ENCODE measurements at regions of chr11 and their contacts with region 1.

Region 1: GRCh38 chr11:82867495-82868082 is 32.6 kb downstream of the PRCP start:
- DNase-seq: peak; percentile 79
- ATAC-seq: peak; percentile 88
- H3K4me3 Mint-ChIP-seq: no peak overlapping the region
- H3K27ac Mint-ChIP-seq: no peak overlapping the region; the same call in 1 of the 2 replicates
- H3K4me1 Mint-ChIP-seq: peaks cover 21% of the 10 kb centered on the region
- H3K27me3 Mint-ChIP-seq: no peaks in the 10 kb centered on the region
- CTCF ChIP-seq: peak; percentile 68

Region 2: GRCh38 chr11:82718307-82718706 is 149.3 kb before region 1 on chr11:
- CTCF ChIA-PET with region 1: interaction called, 22 read pairs
- POLR2A ChIA-PET with region 1: no interaction called
- DNase-seq: peak; percentile 34
- ATAC-seq: peak; percentile 77
- H3K4me3 Mint-ChIP-seq: no peak overlapping the region
- H3K27ac Mint-ChIP-seq: no peak overlapping the region
- H3K4me1 Mint-ChIP-seq: peaks cover 3% of the 10 kb centered on the region; the same call in 1 of the 2 replicates
- H3K27me3 Mint-ChIP-seq: no peaks in the 10 kb centered on the region
- CTCF ChIP-seq: peak; percentile 55

Region 3: GRCh38 chr11:82775736-82776346 is 91.7 kb before region 1 on chr11:
- CTCF ChIA-PET with region 1: interaction called, 17 read pairs
- POLR2A ChIA-PET with region 1: no interaction called
- DNase-seq: peak; percentile 78
- ATAC-seq: peak; percentile 100
- H3K4me3 Mint-ChIP-seq: no peak overlapping the region
- H3K27ac Mint-ChIP-seq: no peak overlapping the region
- H3K4me1 Mint-ChIP-seq: no peaks in the 10 kb centered on the region
- H3K27me3 Mint-ChIP-seq: no peaks in the 10 kb centered on the region
- CTCF ChIP-seq: peak; percentile 80

Region 4: DNA sequence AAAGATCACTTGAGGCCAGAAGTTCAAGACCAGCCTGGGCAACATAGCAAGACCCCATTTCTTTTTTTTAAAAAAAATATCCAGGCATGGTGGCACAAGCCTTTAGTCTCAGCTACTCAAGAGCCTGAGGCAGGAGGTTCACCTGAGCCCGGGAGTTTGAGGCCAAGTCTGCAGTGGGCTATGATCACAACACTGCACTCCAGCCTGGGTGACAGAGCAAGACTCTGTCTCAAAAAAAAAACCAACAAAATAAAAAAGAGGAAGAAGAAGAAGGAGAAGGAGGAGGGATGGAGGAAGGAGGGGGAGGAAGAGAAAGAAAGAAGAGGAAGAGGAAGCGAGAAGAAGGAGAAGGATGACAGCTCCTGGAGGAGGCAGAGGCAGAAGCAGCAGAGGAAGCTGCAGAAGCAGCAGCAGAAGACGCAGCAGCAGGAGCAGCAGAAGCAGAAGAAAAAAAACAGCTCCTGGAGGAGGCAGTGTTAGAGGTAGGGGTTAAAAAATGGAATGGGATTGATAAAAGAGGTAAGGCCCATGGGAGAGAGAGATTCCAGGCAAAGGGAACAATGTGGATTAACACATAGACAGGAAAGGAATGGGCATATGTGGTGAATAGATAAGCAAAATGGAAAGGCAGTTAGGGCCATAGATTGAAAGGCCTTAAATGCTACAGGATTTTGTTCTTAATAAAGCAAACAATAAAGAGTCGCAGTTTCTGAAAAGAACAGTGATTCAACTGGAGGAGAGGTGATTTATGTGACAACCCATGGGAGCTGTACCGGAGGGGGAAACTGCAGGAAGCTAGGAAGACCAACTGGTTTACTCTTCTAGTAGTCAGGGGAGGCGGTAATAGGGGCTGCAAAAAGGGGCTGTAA is 21.8 kb after region 1 on chr11:
- CTCF ChIA-PET with region 1: interaction called, 15 read pairs
- POLR2A ChIA-PET with region 1: no interaction called
- DNase-seq: no peak
- ATAC-seq: peak; percentile 43
- H3K4me3 Mint-ChIP-seq: no peak overlapping the region
- H3K27ac Mint-ChIP-seq: no peak overlapping the region
- H3K4me1 Mint-ChIP-seq: no peaks in the 10 kb centered on the region
- H3K27me3 Mint-ChIP-seq: no peaks in the 10 kb centered on the region
- CTCF ChIP-seq: no peak

Region 5: GRCh38 chr11:82927254-82927880 is 59.8 kb after region 1 on chr11:
- CTCF ChIA-PET with region 1: interaction called, 13 read pairs
- POLR2A ChIA-PET with region 1: no interaction called
- DNase-seq: no peak
- ATAC-seq: peak; percentile 47
- H3K4me3 Mint-ChIP-seq: no peak overlapping the region
- H3K27ac Mint-ChIP-seq: no peak overlapping the region
- H3K4me1 Mint-ChIP-seq: peaks cover 2% of the 10 kb centered on the region; the same call in 1 of the 2 replicates
- H3K27me3 Mint-ChIP-seq: no peaks in the 10 kb centered on the region
- CTCF ChIP-seq: peak; percentile 75